Naive thymus-derived CD4-positive, alpha-beta T cell (primary cell): ENCODE measurements at regions of chr5 and their contacts with region 1.

Region 1: GRCh38 chr5:158769696-158770095 is 330.0 kb downstream of the EBF1 start:
- DNase-seq: no peak
- ATAC-seq: no peak
- H3K4me3 ChIP-seq: no peak overlapping the region
- H3K4me3 Mint-ChIP-seq: no peak overlapping the region
- H3K27ac ChIP-seq: no peak overlapping the region
- H3K27ac Mint-ChIP-seq: no peak overlapping the region
- H3K4me1 ChIP-seq: no peaks in the 10 kb centered on the region
- H3K4me1 Mint-ChIP-seq: peaks cover 0 to 12% (median 6%) of the 10 kb centered on the region in 7 donors
- H3K27me3 ChIP-seq: peaks cover 0 to 4% of the 10 kb centered on the region in 2 donors
- H3K27me3 Mint-ChIP-seq: peaks cover 6 to 25% (median 12%) of the 10 kb centered on the region in 5 donors

Region 2: GRCh38 chr5:158198636-158199035 is 571.1 kb before region 1 on chr5:
- CTCF ChIA-PET with region 1: no interaction called
- POLR2A ChIA-PET with region 1: no interaction called
- intact Hi-C with region 1: no loop called
- DNase-seq: no peak
- ATAC-seq: no peak
- H3K4me3 ChIP-seq: no peak overlapping the region
- H3K4me3 Mint-ChIP-seq: no peak overlapping the region
- H3K27ac ChIP-seq: no peak overlapping the region
- H3K27ac Mint-ChIP-seq: no peak overlapping the region
- H3K4me1 ChIP-seq: no peaks in the 10 kb centered on the region
- H3K4me1 Mint-ChIP-seq: peaks cover 0 to 2% (median 0%) of the 10 kb centered on the region in 7 donors
- H3K27me3 ChIP-seq: no peaks in the 10 kb centered on the region
- H3K27me3 Mint-ChIP-seq: peaks cover 0 to 13% (median 7%) of the 10 kb centered on the region in 5 donors

Region 3: GRCh38 chr5:158780656-158781237 is 11.1 kb after region 1 on chr5:
- CTCF ChIA-PET with region 1: no interaction called
- POLR2A ChIA-PET with region 1: no interaction called
- intact Hi-C with region 1: no loop called
- DNase-seq: no peak
- ATAC-seq: no peak
- H3K4me3 ChIP-seq: no peak overlapping the region
- H3K4me3 Mint-ChIP-seq: no peak overlapping the region
- H3K27ac ChIP-seq: no peak overlapping the region
- H3K27ac Mint-ChIP-seq: no peak overlapping the region
- H3K4me1 ChIP-seq: no peaks in the 10 kb centered on the region
- H3K4me1 Mint-ChIP-seq: no peaks in the 10 kb centered on the region
- H3K27me3 ChIP-seq: no peaks in the 10 kb centered on the region
- H3K27me3 Mint-ChIP-seq: peaks cover 0 to 6% (median 0%) of the 10 kb centered on the region in 5 donors

Region 4: GRCh38 chr5:158938200-158938599 is 168.5 kb after region 1 on chr5:
- CTCF ChIA-PET with region 1: no interaction called
- POLR2A ChIA-PET with region 1: no interaction called
- intact Hi-C with region 1: loop called in 1 of 2 experiments (anchors 10 kb)
- DNase-seq: no peak
- ATAC-seq: no peak
- H3K4me3 ChIP-seq: no peak overlapping the region
- H3K4me3 Mint-ChIP-seq: no peak overlapping the region
- H3K27ac ChIP-seq: no peak overlapping the region
- H3K27ac Mint-ChIP-seq: no peak overlapping the region
- H3K4me1 ChIP-seq: no peaks in the 10 kb centered on the region
- H3K4me1 Mint-ChIP-seq: peaks cover 0 to 2% (median 0%) of the 10 kb centered on the region in 7 donors
- H3K27me3 ChIP-seq: no peaks in the 10 kb centered on the region
- H3K27me3 Mint-ChIP-seq: peaks cover 0 to 15% (median 7%) of the 10 kb centered on the region in 5 donors